PC-3 (cell line): ENCODE measurements at regions of chr2 and their contacts with region 1.

Region 1: DNA sequence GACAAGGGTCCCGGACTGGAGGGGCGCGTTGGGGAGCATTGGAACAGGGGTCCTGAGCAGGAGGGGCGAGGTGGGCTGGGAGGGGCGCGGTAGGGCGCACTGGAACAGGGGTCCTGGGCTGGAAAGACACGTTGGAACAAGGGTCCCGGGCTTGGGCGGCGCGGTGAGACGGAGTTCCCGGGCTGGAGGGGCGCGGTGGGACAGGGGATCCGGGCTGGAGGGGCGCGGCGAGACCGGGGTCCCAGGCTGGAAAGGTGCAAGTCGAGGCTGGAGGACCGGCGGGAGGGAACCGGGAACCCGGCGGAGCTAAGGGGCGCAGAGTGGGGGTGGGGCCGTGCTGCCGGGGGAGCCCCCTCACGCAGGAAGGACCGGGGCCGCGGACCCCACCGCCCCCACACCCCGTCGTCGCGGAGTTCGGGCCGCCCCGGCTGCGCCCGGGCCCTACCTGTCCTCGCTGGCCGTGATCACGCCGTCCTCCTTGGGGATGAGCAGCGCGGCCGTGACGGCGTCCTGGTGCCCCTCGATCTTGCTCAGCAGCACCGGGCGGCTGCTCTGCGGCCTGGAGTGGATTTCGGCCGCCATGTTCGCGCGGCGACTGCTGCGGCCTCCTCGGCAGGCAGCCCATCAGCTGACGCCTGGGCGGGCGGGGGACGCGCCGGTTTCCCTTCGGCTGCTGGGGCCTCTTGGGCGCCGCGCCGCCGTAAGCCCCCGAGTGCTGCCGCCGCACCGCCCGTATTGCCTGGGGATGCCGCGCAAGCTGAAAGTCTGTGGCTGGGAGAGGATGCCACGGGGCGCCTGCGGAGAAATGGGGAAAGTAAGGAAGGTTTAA is at the start of gene WDFY1:
- DNase-seq: peak; percentile 84
- ATAC-seq: peak; percentile 66
- H3K4me3 ChIP-seq: peak within 1 kb of the TSS; percentile 92
- H3K27ac ChIP-seq: peak within 1 kb of the TSS; percentile 75
- H3K4me1 ChIP-seq: peaks cover 23% of the 10 kb centered on the region
- H3K27me3 ChIP-seq: no peaks in the 10 kb centered on the region
- CTCF ChIP-seq: no peak
- total RNA-seq, gene WDFY1: 44.9 and 47.7 TPM in 2 replicates

Region 2: DNA sequence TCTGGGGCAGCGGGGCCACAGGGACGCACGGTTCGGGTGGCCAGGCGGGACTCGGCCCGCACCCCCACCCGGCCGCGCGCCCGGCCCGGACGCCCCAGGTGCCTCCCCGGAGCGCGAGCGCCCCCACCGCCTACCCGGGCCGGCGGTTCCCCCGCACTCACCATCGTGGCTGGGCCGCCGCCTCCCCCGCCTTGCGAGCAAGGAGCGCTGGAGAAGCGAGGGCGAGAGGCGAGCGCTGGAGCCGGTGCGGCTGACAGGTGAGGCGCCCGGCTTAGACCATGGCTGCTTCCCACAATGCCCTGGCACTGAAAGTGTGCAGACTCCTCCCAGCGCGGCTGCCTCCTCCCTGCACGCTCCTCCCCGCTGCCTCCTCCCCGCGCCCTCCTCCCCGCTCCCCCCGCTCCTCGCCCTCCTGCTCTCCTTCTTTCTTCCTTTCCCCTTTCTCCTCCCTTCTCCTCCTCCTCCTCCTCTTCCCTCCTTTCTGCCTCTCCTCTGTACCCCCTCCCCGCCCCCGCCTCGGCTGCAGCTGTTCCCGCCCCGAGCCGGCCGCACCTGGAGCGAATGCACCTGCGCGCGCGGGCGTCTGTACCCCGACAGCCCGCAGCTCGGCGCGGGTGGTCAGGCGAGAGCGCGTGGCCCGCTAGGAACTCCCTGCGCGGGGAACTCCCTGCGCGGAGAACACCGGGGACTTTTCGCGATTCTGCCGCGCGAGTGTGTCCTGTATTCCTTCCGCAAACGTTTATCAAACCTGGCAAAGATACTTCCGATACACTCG is 107.4 kb before region 1 on chr2 and contains the start of gene AP1S3:
- CTCF ChIA-PET with region 1: no interaction called
- POLR2A ChIA-PET with region 1: interaction called, 4 read pairs
- intact Hi-C with region 1: loop called (anchors 10 kb)
- DNase-seq: peak; percentile 84
- ATAC-seq: peak; percentile 87
- H3K4me3 ChIP-seq: peak within 1 kb of the TSS; percentile 95
- H3K27ac ChIP-seq: peak within 1 kb of the TSS; percentile 71
- H3K4me1 ChIP-seq: peaks cover 27% of the 10 kb centered on the region; the same call in 1 of the 2 replicates
- H3K27me3 ChIP-seq: no peaks in the 10 kb centered on the region
- CTCF ChIP-seq: no peak
- total RNA-seq, gene AP1S3: 34.3 and 37.6 TPM in 2 replicates

Region 3: GRCh38 chr2:223896833-223897311 is 48.0 kb before region 1 on chr2:
- CTCF ChIA-PET with region 1: no interaction called
- POLR2A ChIA-PET with region 1: no interaction called
- intact Hi-C with region 1: loop called (anchors 5 kb)
- DNase-seq: no peak
- ATAC-seq: no peak
- H3K4me3 ChIP-seq: no peak overlapping the region
- H3K27ac ChIP-seq: no peak overlapping the region
- H3K4me1 ChIP-seq: peaks cover 5% of the 10 kb centered on the region
- H3K27me3 ChIP-seq: no peaks in the 10 kb centered on the region
- CTCF ChIP-seq: no peak

Region 4: DNA sequence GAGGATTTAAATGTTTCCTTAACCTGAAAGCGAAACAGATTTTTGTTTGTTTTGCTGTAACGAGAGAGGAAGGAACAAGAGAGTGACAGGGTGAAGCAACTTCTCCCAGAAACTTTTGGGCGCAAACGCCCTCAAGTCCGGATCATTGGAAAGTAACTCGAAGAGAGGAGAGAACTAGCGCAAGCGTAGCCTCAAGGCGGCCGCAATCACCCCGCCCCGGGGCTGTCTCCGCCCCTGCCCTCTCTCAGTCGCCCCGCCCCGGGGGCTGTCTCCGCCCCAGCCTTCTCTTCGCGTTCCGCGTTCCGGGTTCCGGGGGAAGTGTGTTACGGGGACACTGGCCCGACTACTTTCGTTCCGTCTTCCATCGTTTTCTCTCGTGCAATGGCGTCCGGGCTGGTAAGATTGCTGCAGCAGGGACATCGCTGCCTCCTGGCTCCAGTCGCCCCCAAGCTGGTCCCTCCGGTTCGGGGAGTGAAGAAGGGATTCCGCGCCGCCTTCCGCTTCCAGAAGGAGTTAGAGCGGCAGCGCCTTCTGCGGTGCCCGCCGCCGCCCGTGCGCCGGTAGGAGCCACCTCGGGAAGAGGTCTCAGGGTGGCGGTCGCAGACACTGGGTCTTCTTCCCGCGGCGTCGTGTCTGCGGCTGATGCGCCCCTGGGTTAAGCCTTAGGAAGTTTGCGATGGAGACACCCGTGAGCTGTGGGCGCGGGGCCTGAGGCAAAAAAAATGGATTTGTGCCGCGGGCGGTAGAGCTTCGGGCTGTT is 12.4 kb after region 1 on chr2 and contains the start of gene MRPL44:
- CTCF ChIA-PET with region 1: no interaction called
- POLR2A ChIA-PET with region 1: no interaction called
- intact Hi-C with region 1: loop called (anchors 1 kb)
- DNase-seq: peak; percentile 97
- ATAC-seq: peak; percentile 99
- H3K4me3 ChIP-seq: peak within 1 kb of the TSS; percentile 90
- H3K27ac ChIP-seq: peak within 1 kb of the TSS; percentile 16; the same call in 1 of the 2 replicates
- H3K4me1 ChIP-seq: peaks cover 33% of the 10 kb centered on the region
- H3K27me3 ChIP-seq: no peaks in the 10 kb centered on the region
- CTCF ChIP-seq: no peak
- total RNA-seq, gene MRPL44: 22.4 and 24.8 TPM in 2 replicates